ENCODE measurements at regions of chr13 and their contacts with region 1.

Region 1: DNA sequence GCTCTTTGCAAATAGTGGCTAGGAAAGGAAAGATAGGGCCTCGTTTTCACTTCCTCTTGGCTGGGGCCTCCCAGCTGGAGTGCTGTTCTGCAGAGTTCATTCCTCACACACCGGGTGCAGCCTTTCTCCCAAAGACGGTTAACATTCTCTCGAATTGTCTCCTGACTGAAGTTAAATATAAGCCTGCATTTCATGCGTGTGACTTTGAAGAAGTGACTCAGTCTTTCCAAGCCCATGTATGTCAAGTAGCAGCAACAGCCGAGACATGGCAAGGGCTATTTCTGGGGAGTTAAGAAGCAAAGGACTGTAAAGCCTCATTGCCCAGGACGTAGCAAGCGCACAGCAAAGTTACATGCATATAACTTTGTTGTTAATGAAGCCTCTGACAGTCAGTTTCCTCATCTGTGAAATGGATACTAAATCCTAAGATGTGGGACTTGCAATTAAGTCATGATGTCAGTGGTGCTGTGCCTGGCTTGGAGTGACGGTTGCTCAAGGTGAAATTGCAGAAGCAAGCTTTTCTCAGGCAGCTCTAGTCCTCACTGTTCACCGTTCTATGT is 502.4 kb downstream of the MYO16 start:
- DNase-seq: no peak
- ATAC-seq: peak; percentile 55 to 83 (median 69)
- H3K4me3 ChIP-seq: no peak overlapping the region
- H3K27ac ChIP-seq: no peak overlapping the region
- H3K4me1 ChIP-seq: peaks cover 0 to 13% (median 0%) of the 10 kb centered on the region in 9 donors
- H3K27me3 ChIP-seq: no peaks in the 10 kb centered on the region
- CTCF ChIP-seq: no peak

Region 2: DNA sequence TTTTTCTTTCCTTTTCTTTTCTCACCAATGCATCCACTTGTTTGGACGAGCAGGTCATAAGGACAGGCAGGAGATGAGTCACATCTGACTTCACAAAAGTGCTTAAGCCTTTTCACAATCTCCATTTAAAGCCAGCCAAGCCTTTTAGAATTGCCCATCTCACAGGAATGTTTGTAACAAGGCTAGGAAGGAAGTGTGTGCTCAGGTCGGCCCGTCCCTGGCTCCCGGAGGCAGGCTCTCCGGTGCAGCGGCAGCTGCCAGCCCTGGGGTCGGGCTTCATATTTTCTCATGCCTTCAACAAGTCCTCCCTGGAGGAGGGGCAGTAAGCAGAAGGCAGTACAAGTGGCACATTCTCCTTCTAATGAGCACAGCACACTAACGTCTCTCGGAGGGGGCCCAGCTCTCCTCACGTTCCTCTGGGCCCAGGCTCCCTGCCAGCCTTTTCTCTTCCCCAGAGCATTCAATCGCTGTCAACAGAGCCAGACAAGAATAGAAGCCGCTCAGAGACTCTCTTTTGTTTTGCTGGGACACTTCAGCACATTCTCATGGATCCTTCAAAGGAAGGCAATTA is 994.7 kb after region 1 on chr13:
- intact Hi-C with region 1: loop called in 1 of 10 experiments (anchors 10 kb)
- DNase-seq: peak; percentile 71 to 77
- ATAC-seq: peak; percentile 79 to 92 (median 85)
- H3K4me3 ChIP-seq: peak overlapping the region in 7 of 10 donors; percentile 7 to 37 (median 19)
- H3K27ac ChIP-seq: peak overlapping the region; percentile 53 to 92 (median 84)
- H3K4me1 ChIP-seq: peaks cover 5 to 43% (median 29%) of the 10 kb centered on the region in 9 donors
- H3K27me3 ChIP-seq: peaks cover 0 to 4% (median 0%) of the 10 kb centered on the region in 7 donors
- CTCF ChIP-seq: no peak

Measured in heart right ventricle (tissue), 16 donors.